Right ventricle myocardium superior (tissue), 1 donor: ENCODE measurements at regions of chr6 and their contacts with region 1.

Region 1: DNA sequence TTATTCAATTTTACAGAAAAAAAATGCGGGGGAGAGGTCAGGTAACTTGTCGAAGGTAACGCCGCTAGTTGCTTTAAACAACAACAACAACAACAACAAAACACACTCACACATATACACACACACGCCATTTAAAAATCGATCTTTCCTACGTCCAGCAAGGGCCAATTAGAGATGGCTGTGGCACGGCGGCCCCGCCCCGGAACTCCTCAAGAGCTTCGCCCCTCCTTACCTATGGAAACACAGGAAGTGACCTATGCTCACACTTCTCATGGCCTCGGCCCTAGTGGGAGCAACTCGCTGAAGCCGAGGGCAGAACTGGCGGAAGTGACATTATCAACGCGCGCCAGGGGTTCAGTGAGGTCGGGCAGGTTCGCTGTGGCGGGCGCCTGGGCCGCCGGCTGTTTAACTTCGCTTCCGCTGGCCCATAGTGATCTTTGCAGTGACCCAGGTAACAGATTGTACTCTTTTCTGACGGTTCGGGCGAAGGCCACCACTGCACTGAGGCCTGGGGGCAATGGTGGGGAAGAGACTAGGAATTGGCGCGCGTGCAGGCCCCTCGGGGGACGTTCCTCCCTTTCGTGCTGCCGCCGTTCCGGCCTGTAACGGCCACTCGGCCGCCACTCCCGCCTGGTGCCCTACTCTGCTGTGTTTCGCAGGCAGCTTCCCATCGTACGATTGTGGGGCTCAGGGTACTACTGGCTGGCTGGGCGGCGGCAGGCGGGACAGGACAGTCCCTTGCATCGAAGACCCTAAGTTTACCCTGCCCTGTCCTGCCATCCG is at the start of gene TBP:
- DNase-seq: peak; percentile 98
- ATAC-seq: peak; percentile 97
- total RNA-seq, gene TBP: 8.1 TPM

Region 2: DNA sequence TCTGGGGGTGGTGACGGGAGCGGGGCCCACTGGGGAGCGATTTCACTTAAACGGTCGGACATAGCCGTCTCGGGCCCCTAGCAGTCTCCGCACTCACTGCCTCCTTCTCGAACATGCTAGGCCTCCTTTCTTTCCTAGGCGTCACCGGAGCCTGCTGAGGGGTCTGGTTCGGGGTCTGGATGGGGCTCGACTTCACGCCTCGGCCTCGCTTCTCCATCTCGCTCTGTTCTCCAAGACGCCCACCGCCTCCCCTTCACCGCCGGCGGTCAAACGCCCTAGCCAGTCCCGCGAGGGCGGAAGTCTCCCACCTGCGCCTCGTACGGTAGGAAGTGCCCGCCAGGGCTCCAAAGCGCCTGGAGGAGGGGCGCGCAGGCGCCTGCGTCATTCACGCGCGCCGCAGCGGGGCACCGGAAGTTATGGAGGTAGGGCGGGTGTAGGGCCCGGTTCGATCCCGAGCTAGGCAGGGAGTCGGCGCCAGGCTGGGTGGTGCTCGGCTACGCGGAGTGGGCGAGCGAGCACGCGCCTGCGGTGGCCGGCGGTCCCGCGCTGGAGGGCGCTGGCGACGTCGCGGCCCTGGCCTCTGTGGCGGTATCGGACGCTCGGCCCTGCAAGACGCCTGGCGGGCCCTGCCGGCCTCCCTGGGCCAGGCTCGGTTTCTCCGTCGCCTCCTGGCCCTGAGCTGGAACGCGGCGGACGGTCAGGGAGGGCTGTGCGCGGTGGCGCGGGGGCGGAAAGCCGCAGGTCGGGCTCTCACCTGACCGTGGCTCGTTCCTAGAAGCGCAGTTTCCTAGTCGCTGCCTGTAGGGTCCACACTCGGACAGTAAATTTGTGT is 802.7 kb before region 1 on chr6 and contains the starts of genes DYNLT2 and ERMARD:
- intact Hi-C with region 1: loop called (anchors 10 kb)
- DNase-seq: peak; percentile 96
- ATAC-seq: peak; percentile 100
- total RNA-seq, gene DYNLT2: 0.75 TPM
- total RNA-seq, gene ERMARD: 6.9 TPM

Region 3: GRCh38 chr6:170596426-170596825 is 42.2 kb after region 1 on chr6:
- intact Hi-C with region 1: no loop called
- DNase-seq: no peak
- ATAC-seq: no peak